Posterior cingulate gyrus (tissue), 11 donors: ENCODE measurements at regions of chr3 and their contacts with region 1.

Region 1: GRCh38 chr3:112642912-112643506 is 2.1 kb upstream of the CCDC80 start:
- DNase-seq: peak; percentile 58 to 95 (median 78)

Region 2: DNA sequence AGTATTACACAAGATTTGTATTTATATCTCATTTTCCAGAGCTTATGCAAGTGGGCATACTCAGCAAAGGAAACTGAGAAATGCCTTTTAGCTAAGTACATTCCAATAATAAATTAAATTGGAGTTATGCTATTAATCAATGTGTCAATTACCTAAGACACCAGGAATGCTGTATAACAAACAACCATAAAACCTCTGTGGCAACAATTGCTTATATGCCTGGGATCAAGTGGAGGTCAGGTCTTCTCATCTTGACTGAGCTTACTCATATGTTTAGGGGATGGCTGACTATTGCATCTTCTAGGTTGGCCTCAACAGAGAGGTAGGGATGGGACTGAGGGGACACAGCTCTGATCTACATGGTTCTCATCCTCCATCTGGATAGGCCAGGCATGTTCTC is 173.0 kb after region 1 on chr3:
- intact Hi-C with region 1: loop called (anchors 2 kb)
- DNase-seq: no peak